Activated naive CD4-positive, alpha-beta T cell treated with anti-CD3 and anti-CD28 coated beads, Interleukin-2, amount 10 ng/mL, durations not matched to agents 7 days and 5 days (primary cell): ENCODE measurements at regions of chr6 and their contacts with region 1.

Region 1: DNA sequence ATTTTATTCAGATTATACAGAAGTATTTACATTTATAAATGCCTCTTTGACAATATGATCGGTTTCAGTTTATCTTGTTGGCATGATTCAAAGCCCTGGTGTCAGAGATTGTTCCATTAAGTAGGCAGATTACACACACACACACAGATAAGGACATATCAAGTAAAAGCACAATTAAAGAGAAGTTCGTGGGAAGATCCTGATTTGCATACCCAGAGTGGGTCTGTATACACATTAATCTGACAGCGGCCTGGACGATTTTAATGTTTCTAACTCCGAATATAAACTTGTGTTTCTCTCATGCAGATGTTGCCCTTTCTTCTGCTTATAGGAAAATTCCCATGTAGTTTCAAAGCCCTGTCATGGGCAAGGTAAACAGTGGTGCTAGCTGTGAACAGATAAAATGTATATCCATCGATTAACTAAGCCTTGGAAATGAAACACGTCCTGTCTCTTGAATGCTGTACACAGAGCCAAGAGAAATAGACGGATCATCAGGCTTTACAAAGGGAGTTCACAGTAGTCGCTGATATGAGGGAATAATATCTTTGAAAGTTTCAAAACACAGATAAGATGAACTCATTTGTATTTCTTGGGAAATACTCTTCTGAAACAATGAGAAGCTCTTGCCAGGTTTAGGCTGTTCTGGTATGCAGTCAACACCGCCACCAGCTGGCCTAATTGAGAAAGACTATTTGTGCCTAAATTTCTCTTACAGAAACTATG is 108.2 kb upstream of the GMDS start:
- DNase-seq: peak; percentile 75
- H3K4me3 Mint-ChIP-seq: no peak overlapping the region
- H3K27ac Mint-ChIP-seq: no peak overlapping the region
- H3K4me1 Mint-ChIP-seq: no peaks in the 10 kb centered on the region
- H3K27me3 Mint-ChIP-seq: no peaks in the 10 kb centered on the region

Region 2: GRCh38 chr6:1596088-1596852 is 757.3 kb before region 1 on chr6:
- CTCF ChIA-PET with region 1: interaction called, 11 read pairs
- DNase-seq: peak; percentile 74
- H3K4me3 Mint-ChIP-seq: no peak overlapping the region
- H3K27ac Mint-ChIP-seq: no peak overlapping the region
- H3K4me1 Mint-ChIP-seq: peaks cover 6% of the 10 kb centered on the region
- H3K27me3 Mint-ChIP-seq: peaks cover 92% of the 10 kb centered on the region